ENCODE measurements at regions of chr2 and their contacts with region 1.

Region 1: GRCh38 chr2:163997466-163997865 is 261.7 kb upstream of the FIGN start:
- DNase-seq: peak; percentile 34 to 42
- H3K4me3 ChIP-seq: no peak overlapping the region
- H3K4me3 Mint-ChIP-seq: no peak overlapping the region
- H3K27ac Mint-ChIP-seq: no peak overlapping the region
- H3K4me1 ChIP-seq: no peaks in the 10 kb centered on the region
- H3K4me1 Mint-ChIP-seq: peaks cover 6% of the 10 kb centered on the region
- H3K27me3 ChIP-seq: no peaks in the 10 kb centered on the region
- H3K27me3 Mint-ChIP-seq: peaks cover 4% of the 10 kb centered on the region
- CTCF ChIP-seq: no peak

Region 2: DNA sequence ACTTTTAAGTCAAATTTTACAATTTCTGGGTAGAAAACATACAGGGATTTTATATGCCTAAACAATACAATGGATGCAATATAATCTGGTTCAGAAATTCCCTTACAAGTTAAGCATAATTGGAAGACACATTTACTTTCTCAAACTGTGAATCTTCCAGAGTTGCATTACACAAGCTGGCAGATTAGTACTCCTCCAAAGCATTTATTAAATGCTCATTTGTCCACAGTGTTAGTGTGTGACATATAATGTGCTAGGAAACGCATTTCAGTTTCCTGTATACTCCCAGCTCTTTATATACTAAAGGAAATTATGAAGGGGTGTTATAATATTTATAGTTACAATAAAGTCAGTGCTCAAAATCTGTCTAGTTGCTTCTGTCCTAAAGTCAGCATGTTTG is 22.7 kb before region 1 on chr2:
- CTCF ChIA-PET with region 1: no interaction called
- POLR2A ChIA-PET with region 1: no interaction called
- intact Hi-C with region 1: loop called (anchors 1 kb)
- DNase-seq: no peak
- H3K4me3 ChIP-seq: no peak overlapping the region
- H3K4me3 Mint-ChIP-seq: no peak overlapping the region
- H3K27ac Mint-ChIP-seq: no peak overlapping the region
- H3K4me1 ChIP-seq: peaks cover 13% of the 10 kb centered on the region
- H3K4me1 Mint-ChIP-seq: peaks cover 7% of the 10 kb centered on the region
- H3K27me3 ChIP-seq: no peaks in the 10 kb centered on the region
- H3K27me3 Mint-ChIP-seq: no peaks in the 10 kb centered on the region
- CTCF ChIP-seq: no peak

Region 3: DNA sequence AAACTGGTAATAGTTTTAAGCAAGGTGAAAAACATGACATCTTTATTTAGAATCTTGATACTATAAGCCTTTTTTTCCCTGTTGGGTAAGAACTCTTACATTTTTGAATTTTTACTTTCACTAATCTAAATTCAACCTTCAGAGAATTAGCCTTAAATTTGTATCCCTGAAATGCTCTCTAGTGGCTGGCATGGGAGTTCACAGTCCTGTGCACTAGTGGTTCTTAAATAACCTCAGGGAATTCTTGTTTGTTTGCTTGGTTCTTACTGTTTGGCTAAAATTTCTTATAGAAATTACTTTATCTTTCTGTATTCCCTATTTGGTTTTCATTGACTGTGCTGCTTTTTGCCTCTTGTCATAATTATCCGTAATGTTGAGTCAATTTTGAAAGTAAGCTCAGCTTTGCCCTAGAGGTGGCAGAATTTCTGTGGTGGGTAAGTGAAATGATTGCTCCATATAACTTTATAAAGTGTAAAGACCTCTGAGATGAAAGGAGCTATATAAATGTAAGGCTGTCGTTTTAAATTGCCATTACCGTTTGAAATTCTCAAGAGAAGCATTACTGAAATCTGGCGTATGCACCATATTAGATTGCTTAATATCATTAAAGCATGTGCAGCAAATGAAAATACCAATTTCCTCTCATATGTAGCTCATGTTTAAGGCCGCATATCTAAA is 129.6 kb after region 1 on chr2:
- CTCF ChIA-PET with region 1: no interaction called
- POLR2A ChIA-PET with region 1: no interaction called
- intact Hi-C with region 1: no loop called
- DNase-seq: no peak
- H3K4me3 ChIP-seq: no peak overlapping the region
- H3K4me3 Mint-ChIP-seq: no peak overlapping the region
- H3K27ac Mint-ChIP-seq: no peak overlapping the region
- H3K4me1 ChIP-seq: no peaks in the 10 kb centered on the region
- H3K4me1 Mint-ChIP-seq: no peaks in the 10 kb centered on the region
- H3K27me3 ChIP-seq: no peaks in the 10 kb centered on the region
- H3K27me3 Mint-ChIP-seq: no peaks in the 10 kb centered on the region
- CTCF ChIP-seq: no peak

Region 4: GRCh38 chr2:164220265-164220664 is 222.8 kb after region 1 on chr2:
- CTCF ChIA-PET with region 1: no interaction called
- POLR2A ChIA-PET with region 1: no interaction called
- intact Hi-C with region 1: no loop called
- DNase-seq: no peak
- H3K4me3 ChIP-seq: no peak overlapping the region
- H3K4me3 Mint-ChIP-seq: no peak overlapping the region
- H3K27ac Mint-ChIP-seq: no peak overlapping the region
- H3K4me1 ChIP-seq: no peaks in the 10 kb centered on the region
- H3K4me1 Mint-ChIP-seq: no peaks in the 10 kb centered on the region
- H3K27me3 ChIP-seq: no peaks in the 10 kb centered on the region
- H3K27me3 Mint-ChIP-seq: no peaks in the 10 kb centered on the region
- CTCF ChIP-seq: no peak